ENCODE measurements at regions of chr2 and their contacts with region 1.

Region 1: DNA sequence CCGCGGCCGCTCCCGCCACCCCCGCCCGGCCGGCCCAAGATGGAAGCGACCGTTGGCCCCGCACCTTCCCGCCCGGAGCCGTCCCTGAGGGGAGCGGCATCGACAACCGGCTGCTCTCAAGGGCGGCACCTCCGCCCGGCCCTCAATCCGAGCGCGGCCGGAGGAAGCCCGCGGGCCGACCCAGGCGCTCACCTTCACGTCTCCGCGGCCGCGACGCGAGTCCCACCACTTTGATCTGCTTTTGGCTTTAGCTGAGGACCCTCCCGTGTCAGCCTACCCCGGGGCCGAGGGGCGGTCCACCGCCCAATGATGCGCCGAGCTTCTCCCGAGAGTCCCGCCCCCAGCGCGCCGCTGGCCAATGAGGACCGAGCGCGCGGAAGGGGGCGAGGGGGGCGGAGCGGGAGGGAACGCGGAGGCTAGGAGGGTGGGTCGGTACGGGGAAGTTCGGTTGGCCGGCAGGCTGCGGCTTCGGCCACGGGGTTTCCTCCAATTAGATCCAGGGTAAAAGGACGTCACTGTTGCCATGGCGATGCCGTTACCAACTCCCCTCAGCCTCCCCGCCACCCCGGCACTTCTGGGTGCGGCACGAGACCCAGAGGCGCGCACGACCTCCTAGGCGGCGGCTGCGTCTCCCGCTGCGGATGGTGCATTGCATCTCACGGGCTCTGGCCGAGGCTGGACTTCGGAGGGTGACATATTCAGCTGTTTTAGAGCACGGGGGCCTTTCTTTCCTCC is at the start of gene YWHAQ:
- H3K4me3 ChIP-seq: peak within 1 kb of the TSS; percentile 72
- H3K27ac ChIP-seq: peak within 1 kb of the TSS; percentile 95
- H3K4me1 ChIP-seq: 0 out of 2 replicates have a peak, but pooled peaks cover 4% of the 10 kb centered on the region
- CTCF ChIP-seq: no peak

Region 2: GRCh38 chr2:9555297-9556141 is 75.4 kb before region 1 on chr2 and contains the start of gene ADAM17:
- CTCF ChIA-PET with region 1: no interaction called
- POLR2A ChIA-PET with region 1: interaction called, 58 read pairs
- H3K4me3 ChIP-seq: peak within 1 kb of the TSS; percentile 96
- H3K27ac ChIP-seq: peak within 1 kb of the TSS; percentile 99
- H3K4me1 ChIP-seq: peaks cover 11% of the 10 kb centered on the region
- CTCF ChIP-seq: peak; percentile 95

Region 3: DNA sequence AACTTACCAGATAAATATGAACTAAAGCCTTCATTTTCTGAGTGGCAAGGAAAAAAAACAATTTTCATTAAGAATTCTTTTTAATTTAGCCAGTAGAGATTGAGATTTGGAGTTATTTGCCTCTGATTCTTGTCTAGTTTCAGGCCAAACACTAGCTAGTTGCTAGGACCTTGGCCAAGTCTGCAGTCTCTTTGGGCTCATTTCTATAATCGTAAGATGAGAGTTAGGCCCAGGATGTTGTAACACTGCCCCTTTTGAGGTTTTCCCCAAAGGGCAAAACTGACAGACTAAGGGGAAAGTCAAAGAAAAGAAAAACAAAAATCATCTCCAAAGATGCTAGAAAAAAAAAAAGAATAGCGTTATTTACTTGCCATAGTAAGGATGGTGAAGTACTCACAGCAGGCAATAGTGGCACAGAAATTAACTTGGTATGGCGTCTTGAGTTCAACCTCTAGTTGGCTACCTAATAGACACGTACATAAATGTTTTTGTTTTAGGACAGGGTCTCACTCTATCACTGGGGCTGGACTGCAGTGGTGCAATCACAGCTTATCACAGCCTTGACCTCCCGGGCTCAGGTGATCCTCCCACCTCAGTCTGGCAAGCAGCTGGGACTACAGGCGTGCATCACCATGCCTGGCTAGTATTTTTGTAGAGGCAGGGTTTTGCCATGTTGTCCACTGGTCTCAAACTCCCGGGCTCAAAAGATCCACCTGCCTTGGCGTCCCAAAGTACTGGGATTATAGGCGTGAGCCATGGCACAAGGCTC is 52.3 kb before region 1 on chr2:
- CTCF ChIA-PET with region 1: no interaction called
- POLR2A ChIA-PET with region 1: interaction called, 10 read pairs
- H3K4me3 ChIP-seq: no peak overlapping the region
- H3K27ac ChIP-seq: no peak overlapping the region
- H3K4me1 ChIP-seq: no peaks in the 10 kb centered on the region
- CTCF ChIP-seq: no peak

Region 4: GRCh38 chr2:9618410-9618809 is 12.5 kb before region 1 on chr2:
- CTCF ChIA-PET with region 1: no interaction called
- POLR2A ChIA-PET with region 1: interaction called, 22 read pairs
- H3K4me3 ChIP-seq: no peak overlapping the region
- H3K27ac ChIP-seq: no peak overlapping the region
- H3K4me1 ChIP-seq: peaks cover 19% of the 10 kb centered on the region
- CTCF ChIP-seq: no peak

Region 5: DNA sequence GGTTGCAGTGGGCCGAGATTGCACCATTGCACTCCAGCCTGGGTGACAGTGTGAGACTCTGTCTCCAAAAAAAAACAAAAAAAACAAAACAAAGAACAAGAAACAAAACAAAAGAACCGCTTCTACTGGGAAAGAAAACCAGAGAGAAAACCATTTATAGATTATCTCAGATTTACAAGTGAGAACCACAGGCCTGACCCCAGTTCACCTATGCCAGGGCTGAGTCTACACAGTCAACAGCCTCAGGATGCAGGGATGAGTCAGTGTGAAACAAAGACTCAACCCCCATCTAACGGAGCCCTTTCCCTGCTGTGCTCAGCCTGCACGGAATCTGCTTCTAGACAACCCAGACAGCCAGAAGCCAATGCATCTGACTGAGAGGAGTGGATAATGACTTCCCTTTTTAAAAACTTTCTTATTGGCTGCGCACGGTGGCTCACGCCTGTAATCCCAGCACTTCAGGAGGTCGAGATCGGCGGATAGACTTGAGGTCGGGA is 25.4 kb after region 1 on chr2:
- CTCF ChIA-PET with region 1: no interaction called
- POLR2A ChIA-PET with region 1: interaction called, 12 read pairs
- H3K4me3 ChIP-seq: no peak overlapping the region
- H3K27ac ChIP-seq: no peak overlapping the region; the same call in 1 of the 2 replicates
- H3K4me1 ChIP-seq: peaks cover 11% of the 10 kb centered on the region
- CTCF ChIP-seq: no peak

Region 6: DNA sequence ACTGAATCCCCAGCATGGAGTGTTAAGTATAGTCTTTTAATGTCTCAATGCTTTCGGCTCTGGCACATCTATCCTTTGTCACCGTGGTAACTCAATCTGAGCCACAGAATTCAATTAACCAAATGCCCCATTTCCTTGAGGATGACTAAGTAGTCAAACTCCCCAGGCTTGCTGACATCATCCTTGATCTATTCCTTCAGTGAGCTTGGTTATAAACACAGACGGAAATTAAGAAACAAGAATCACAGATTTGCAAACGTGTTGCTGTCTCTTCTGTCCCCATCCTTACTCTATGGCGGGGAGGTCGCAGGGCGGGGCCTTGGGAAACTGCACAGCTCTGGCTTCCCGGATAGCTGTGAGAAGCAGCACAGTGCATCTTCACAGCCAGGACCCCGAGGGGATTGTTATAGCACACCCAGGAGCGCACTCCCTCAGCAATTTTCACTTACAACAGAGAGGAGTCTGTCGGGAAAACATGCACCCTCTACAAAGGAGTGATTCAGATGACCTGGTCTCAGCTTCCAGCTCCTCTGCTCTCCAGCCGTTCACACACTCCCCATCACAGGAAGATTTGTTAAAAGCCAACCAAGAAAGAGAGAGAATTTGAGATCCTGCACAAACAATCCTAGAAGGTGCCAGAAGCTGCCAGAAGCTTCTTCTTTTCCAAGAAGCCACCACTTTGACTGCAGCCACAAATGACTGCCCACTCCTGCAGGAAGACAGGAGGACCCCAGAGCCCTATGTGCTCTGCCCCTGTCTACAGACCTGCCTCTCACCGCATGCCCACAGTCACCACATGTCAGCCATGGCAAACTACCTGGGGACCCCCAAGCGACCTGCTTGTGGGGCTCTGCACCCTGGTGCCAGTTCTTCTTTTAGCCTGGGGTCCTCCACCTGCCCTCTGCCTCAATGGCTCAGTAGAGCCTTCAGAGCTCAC is 44.8 kb after region 1 on chr2:
- CTCF ChIA-PET with region 1: no interaction called
- POLR2A ChIA-PET with region 1: interaction called, 27 read pairs
- H3K4me3 ChIP-seq: peak overlapping the region; percentile 4
- H3K27ac ChIP-seq: no peak overlapping the region
- H3K4me1 ChIP-seq: 0 out of 2 replicates have a peak, but pooled peaks cover 8% of the 10 kb centered on the region
- CTCF ChIP-seq: no peak